Thyroid gland (tissue), 4 donors: ENCODE measurements at regions of chr7 and their contacts with region 1.

Region 1: GRCh38 chr7:6096581-6096980 is 65.4 kb downstream of the ANKRD61 start:
- DNase-seq: no peak
- H3K4me3 ChIP-seq: no peak overlapping the region
- H3K27ac ChIP-seq: no peak overlapping the region
- H3K4me1 ChIP-seq: no peaks in the 10 kb centered on the region
- H3K27me3 ChIP-seq: no peaks in the 10 kb centered on the region
- CTCF ChIP-seq: no peak
- POLR2A ChIP-seq: no peak

Region 2: DNA sequence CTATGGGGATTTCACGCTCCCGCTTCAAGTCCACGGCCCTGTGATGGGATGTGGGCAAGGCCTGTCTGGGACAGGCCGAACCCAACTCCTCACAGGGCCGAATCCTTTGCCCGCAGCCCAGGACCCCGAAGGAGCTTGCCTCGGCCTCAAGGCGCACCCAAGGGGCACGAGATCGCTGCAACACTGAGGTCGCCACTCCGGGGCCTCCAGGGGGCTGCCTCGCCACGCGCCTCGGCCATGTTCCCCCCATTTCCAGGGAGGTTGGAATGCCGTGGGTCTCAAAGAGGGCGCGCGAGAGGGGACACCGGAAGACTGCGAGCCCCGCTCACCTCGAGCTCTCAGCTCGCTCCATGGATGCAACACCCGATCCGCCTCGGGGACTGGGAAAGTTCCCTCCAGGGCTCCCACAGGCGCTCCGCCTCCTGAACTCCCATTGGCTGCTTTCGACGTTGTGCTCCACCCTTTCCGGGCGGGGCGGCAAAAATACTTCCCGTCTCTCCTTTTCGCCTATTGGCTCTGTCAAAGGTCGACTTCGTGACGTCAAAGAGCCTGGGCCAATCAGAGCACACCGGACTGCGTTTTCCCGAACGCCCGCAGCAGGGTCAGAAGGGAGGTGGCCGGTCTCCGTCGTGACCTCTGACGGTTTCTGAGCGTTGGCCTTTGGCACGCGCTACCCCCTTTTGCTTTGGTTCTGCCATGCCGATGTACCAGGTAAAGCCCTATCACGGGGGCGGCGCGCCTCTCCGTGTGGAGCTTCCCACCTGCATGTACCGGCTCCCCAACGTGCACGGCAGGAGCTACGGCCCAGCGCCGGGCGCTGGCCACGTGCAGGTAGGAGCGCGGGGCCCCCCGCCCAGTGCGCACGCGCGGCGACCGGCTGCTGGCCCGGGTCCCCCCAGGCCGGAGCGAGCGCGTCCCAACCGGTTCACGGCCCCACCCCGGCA is 87.6 kb before region 1 on chr7 and contains the starts of genes AIMP2 and PMS2:
- intact Hi-C with region 1: loop called (anchors 5 kb)
- DNase-seq: peak; percentile 99 to 100
- H3K4me3 ChIP-seq: peak within 1 kb of the TSS; percentile 55 to 75 (median 55)
- H3K27ac ChIP-seq: peak within 1 kb of the TSS; percentile 86 to 96 (median 93)
- H3K4me1 ChIP-seq: peaks cover 39 to 43% of the 10 kb centered on the region in 2 donors
- H3K27me3 ChIP-seq: no peaks in the 10 kb centered on the region
- CTCF ChIP-seq: peak in 2 of 6 experiments; percentile 7 to 25
- POLR2A ChIP-seq: peak in 1 of 2 donors; percentile 87
- total RNA-seq, gene AIMP2: 39.9 to 72.3 (median 53.4) TPM
- total RNA-seq, gene PMS2: 15.9 to 28.1 (median 18.9) TPM